CD4-positive, alpha-beta memory T cell (primary cell): ENCODE measurements at regions of chr7 and their contacts with region 1.

Region 1: GRCh38 chr7:36291387-36292316 is 98.0 kb upstream of the ANLN start:
- DNase-seq: peak; percentile 56 to 70 (median 62)
- H3K4me3 ChIP-seq: no peak overlapping the region
- H3K4me3 Mint-ChIP-seq: peak overlapping the region; percentile 55 to 83 (median 68)
- H3K27ac ChIP-seq: no peak overlapping the region
- H3K27ac Mint-ChIP-seq: peak overlapping the region in 6 of 7 donors; percentile 52 to 89 (median 80)
- H3K4me1 ChIP-seq: peaks cover 50% of the 10 kb centered on the region
- H3K4me1 Mint-ChIP-seq: peaks cover 36 to 61% (median 49%) of the 10 kb centered on the region in 4 donors
- H3K27me3 ChIP-seq: no peaks in the 10 kb centered on the region
- H3K27me3 Mint-ChIP-seq: no peaks in the 10 kb centered on the region

Region 2: GRCh38 chr7:35508623-35509400 is 782.8 kb before region 1 on chr7:
- CTCF ChIA-PET with region 1: no interaction called
- POLR2A ChIA-PET with region 1: no interaction called
- intact Hi-C with region 1: no loop called
- DNase-seq: no peak
- H3K4me3 ChIP-seq: no peak overlapping the region
- H3K4me3 Mint-ChIP-seq: no peak overlapping the region
- H3K27ac ChIP-seq: no peak overlapping the region
- H3K27ac Mint-ChIP-seq: no peak overlapping the region
- H3K4me1 ChIP-seq: no peaks in the 10 kb centered on the region
- H3K4me1 Mint-ChIP-seq: no peaks in the 10 kb centered on the region
- H3K27me3 ChIP-seq: no peaks in the 10 kb centered on the region
- H3K27me3 Mint-ChIP-seq: peaks cover 0 to 13% of the 10 kb centered on the region in 2 donors

Region 3: GRCh38 chr7:35975851-35976454 is 315.7 kb before region 1 on chr7:
- CTCF ChIA-PET with region 1: interaction called, 14 read pairs
- POLR2A ChIA-PET with region 1: no interaction called
- intact Hi-C with region 1: no loop called
- DNase-seq: peak; percentile 63 to 66 (median 63)
- H3K4me3 ChIP-seq: no peak overlapping the region
- H3K4me3 Mint-ChIP-seq: no peak overlapping the region
- H3K27ac ChIP-seq: no peak overlapping the region
- H3K27ac Mint-ChIP-seq: no peak overlapping the region
- H3K4me1 ChIP-seq: peaks cover 4% of the 10 kb centered on the region
- H3K4me1 Mint-ChIP-seq: peaks cover 0 to 5% (median 4%) of the 10 kb centered on the region in 4 donors
- H3K27me3 ChIP-seq: peaks cover 6% of the 10 kb centered on the region
- H3K27me3 Mint-ChIP-seq: peaks cover 13 to 14% of the 10 kb centered on the region in 2 donors

Region 4: GRCh38 chr7:36021367-36021766 is 270.3 kb before region 1 on chr7:
- CTCF ChIA-PET with region 1: interaction called, 13 read pairs
- POLR2A ChIA-PET with region 1: interaction called, 4 read pairs
- intact Hi-C with region 1: loop called (anchors 1 kb)
- DNase-seq: peak in 2 of 5 donors; percentile 10 to 15
- H3K4me3 ChIP-seq: no peak overlapping the region
- H3K4me3 Mint-ChIP-seq: no peak overlapping the region
- H3K27ac ChIP-seq: no peak overlapping the region
- H3K27ac Mint-ChIP-seq: no peak overlapping the region
- H3K4me1 ChIP-seq: no peaks in the 10 kb centered on the region
- H3K4me1 Mint-ChIP-seq: no peaks in the 10 kb centered on the region
- H3K27me3 ChIP-seq: no peaks in the 10 kb centered on the region
- H3K27me3 Mint-ChIP-seq: peaks cover 0 to 3% of the 10 kb centered on the region in 2 donors

Region 5: DNA sequence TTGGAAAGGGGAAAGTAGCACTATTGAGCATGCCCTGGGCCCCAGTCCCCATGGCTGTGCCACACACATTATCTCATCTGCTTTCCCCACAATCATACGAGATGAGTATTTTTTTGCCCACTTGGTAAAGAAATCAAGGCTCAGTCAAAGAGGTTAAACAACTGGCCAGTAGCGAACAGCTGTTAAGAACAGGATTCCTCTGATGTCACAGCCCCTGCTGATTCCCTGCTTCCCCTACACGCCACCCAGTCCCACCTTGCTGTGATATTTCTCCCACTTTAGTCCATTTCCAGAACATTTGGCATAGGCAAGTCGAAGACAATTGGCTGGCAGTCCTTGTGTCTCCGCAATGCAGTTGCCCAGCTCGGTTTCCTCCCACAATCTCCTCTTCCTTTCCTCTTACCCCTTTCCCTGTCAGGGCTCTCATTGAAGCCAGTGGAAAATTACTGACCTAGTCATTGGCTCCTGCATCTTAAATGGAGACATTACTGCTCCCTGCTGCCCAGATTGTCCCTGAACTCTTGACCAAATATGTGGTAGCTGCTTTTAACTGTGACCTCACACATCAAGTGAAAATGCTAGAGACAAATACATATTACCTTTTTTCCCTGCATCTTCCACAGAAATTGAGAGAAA is 195.1 kb before region 1 on chr7:
- CTCF ChIA-PET with region 1: no interaction called
- POLR2A ChIA-PET with region 1: no interaction called
- intact Hi-C with region 1: no loop called
- DNase-seq: no peak
- H3K4me3 ChIP-seq: no peak overlapping the region
- H3K4me3 Mint-ChIP-seq: no peak overlapping the region
- H3K27ac ChIP-seq: no peak overlapping the region
- H3K27ac Mint-ChIP-seq: no peak overlapping the region
- H3K4me1 ChIP-seq: no peaks in the 10 kb centered on the region
- H3K4me1 Mint-ChIP-seq: no peaks in the 10 kb centered on the region
- H3K27me3 ChIP-seq: no peaks in the 10 kb centered on the region
- H3K27me3 Mint-ChIP-seq: peaks cover 0 to 5% of the 10 kb centered on the region in 2 donors

Region 6: GRCh38 chr7:36127075-36127740 is 164.4 kb before region 1 on chr7:
- CTCF ChIA-PET with region 1: interaction called, 11 read pairs
- POLR2A ChIA-PET with region 1: no interaction called
- intact Hi-C with region 1: no loop called
- DNase-seq: no peak
- H3K4me3 ChIP-seq: no peak overlapping the region
- H3K4me3 Mint-ChIP-seq: no peak overlapping the region
- H3K27ac ChIP-seq: no peak overlapping the region
- H3K27ac Mint-ChIP-seq: no peak overlapping the region
- H3K4me1 ChIP-seq: peaks cover 5% of the 10 kb centered on the region
- H3K4me1 Mint-ChIP-seq: peaks cover 5 to 10% (median 6%) of the 10 kb centered on the region in 4 donors
- H3K27me3 ChIP-seq: no peaks in the 10 kb centered on the region
- H3K27me3 Mint-ChIP-seq: no peaks in the 10 kb centered on the region

Region 7: DNA sequence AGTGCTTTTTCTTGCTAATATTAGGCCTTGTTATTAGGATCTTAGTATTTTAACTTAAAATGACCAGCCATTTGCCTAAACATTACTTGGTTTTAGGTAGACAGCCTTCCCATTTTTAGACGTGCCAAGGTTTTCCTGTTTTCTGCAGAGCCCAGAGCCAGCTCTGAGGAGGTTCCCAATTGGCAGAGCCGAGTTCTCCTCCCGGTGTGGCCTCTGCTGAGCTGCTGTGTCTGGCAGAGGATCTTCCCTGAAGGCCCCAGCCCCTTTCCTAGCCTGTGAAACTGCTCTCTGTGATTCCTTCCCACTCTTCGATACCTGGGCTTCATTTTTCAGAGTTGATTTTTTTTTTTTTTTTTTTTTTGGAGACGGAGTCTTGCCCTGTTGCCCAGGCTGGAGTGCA is 47.2 kb before region 1 on chr7:
- CTCF ChIA-PET with region 1: no interaction called
- POLR2A ChIA-PET with region 1: no interaction called
- intact Hi-C with region 1: no loop called
- DNase-seq: no peak
- H3K4me3 ChIP-seq: no peak overlapping the region
- H3K4me3 Mint-ChIP-seq: no peak overlapping the region
- H3K27ac ChIP-seq: no peak overlapping the region
- H3K27ac Mint-ChIP-seq: no peak overlapping the region
- H3K4me1 ChIP-seq: no peaks in the 10 kb centered on the region
- H3K4me1 Mint-ChIP-seq: no peaks in the 10 kb centered on the region
- H3K27me3 ChIP-seq: no peaks in the 10 kb centered on the region
- H3K27me3 Mint-ChIP-seq: no peaks in the 10 kb centered on the region

Region 8: DNA sequence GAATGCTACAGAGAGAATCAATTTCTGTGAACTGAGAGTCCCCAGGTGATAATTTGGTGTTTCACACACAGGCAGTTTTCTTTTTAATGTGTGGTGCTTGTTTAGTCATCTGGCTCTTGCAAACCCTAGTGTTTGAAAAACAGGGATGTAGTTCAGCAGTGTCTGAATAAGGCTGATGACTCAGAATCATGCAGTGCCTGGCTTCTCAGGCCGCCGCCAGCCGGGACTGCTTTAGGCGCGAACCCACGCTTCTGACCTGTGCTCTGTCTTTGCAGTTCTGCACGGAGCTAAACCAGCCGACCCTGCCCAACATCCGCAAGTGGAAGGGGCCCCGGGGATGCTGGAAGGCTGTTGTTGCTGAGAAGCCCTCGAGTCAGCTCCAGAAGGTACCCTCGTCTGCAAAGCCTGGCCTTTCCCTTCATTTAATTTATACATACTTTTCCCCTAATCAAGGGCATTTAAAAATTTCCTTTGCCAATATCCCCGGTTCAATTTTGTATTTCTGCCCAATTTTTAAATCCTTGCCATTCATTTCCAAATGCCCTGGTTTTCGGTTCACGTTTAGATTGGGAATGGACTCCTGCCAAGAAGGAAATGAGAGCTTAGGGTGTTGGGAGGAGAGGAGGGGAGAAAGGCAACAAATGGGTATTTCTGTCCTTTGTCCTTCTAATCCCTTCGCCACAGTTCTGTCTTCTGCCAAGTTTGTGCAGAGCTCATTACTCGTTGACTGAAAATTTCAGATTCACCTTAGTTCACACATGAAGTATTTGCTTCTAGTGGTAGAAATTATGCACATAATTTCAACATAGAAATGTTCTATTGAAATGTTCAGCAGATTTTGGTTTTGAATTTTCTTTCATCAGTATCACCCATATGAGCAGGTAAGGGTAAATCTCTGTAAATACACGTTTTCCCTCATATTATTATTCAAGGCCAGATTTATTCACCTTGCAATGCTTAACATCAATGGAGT is 10.5 kb before region 1 on chr7:
- CTCF ChIA-PET with region 1: interaction called, 12 read pairs
- POLR2A ChIA-PET with region 1: interaction called, 6 read pairs
- intact Hi-C with region 1: no loop called
- DNase-seq: no peak
- H3K4me3 ChIP-seq: no peak overlapping the region
- H3K4me3 Mint-ChIP-seq: peak overlapping the region in 3 of 8 donors; percentile 29 to 46 (median 31)
- H3K27ac ChIP-seq: no peak overlapping the region
- H3K27ac Mint-ChIP-seq: peak overlapping the region in 5 of 7 donors; percentile 7 to 66 (median 43)
- H3K4me1 ChIP-seq: peaks cover 57% of the 10 kb centered on the region
- H3K4me1 Mint-ChIP-seq: peaks cover 25 to 64% (median 43%) of the 10 kb centered on the region in 4 donors
- H3K27me3 ChIP-seq: no peaks in the 10 kb centered on the region
- H3K27me3 Mint-ChIP-seq: no peaks in the 10 kb centered on the region

Region 9: GRCh38 chr7:38178004-38178694 is 1886.5 kb after region 1 on chr7 and contains the start of gene STARD3NL:
- CTCF ChIA-PET with region 1: no interaction called
- POLR2A ChIA-PET with region 1: no interaction called
- intact Hi-C with region 1: no loop called
- DNase-seq: peak; percentile 90 to 97 (median 91)
- H3K4me3 ChIP-seq: peak within 1 kb of the TSS; percentile 97 to 98
- H3K4me3 Mint-ChIP-seq: peak within 1 kb of the TSS; percentile 92 to 100 (median 98)
- H3K27ac ChIP-seq: peak within 1 kb of the TSS; percentile 85
- H3K27ac Mint-ChIP-seq: peak within 1 kb of the TSS; percentile 92 to 98 (median 97)
- H3K4me1 ChIP-seq: peaks cover 27% of the 10 kb centered on the region
- H3K4me1 Mint-ChIP-seq: peaks cover 20 to 34% (median 27%) of the 10 kb centered on the region in 4 donors
- H3K27me3 ChIP-seq: no peaks in the 10 kb centered on the region
- H3K27me3 Mint-ChIP-seq: peaks cover 8 to 11% of the 10 kb centered on the region in 2 donors
- total RNA-seq, gene STARD3NL: 11.4 to 12.6 TPM